ENCODE measurements at regions of chr2 and their contacts with region 1.

Region 1: DNA sequence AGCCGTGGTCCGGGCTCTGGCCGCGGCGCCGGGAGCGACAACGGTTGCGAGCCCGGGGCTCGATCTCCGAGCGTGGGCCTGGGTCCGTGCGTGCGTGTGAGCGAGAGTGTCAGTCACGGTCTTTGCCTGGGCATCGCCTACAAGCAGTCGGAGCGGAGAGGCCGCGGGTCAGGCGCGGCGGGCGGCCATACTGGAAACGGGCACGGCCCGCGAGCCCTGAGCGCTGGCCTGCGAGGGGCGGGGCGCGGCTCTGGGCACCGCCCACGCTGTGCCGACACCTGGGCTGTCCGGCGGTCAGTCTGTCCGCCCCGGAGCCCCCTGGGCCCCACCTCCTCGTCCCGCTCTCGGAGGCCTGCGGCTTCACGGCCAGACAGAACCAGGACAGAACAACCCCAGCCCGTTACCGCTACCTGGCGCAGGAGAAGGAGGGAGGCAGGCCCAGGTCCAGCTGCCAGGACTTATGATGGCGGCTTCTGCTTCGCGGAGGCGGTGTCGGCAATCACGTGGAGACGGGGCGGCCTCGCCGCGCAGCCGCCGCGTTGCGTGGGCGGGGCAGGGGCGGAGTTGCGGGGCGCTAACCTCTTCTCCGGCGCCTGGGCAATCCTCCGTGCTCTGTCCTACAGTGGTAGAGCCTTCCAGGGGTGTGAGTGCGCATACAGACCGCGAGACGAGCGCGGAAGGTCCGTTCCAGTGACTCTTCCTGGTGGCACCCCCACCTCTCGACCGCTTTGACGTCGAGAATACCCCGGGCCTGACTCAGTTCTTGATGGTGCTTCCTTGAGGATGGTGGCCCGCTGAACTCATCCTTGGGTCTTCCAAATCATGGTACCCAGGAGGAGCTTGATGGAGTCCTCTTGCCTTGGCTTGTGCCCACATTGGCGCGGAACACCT is at the start of gene TMEM131:
- DNase-seq: peak; percentile 95
- H3K4me3 ChIP-seq: peak within 1 kb of the TSS; percentile 95 to 98 (median 97)
- H3K27ac ChIP-seq: peak within 1 kb of the TSS; percentile 91
- H3K4me1 ChIP-seq: peaks cover 22% of the 10 kb centered on the region
- H3K27me3 ChIP-seq: no peaks in the 10 kb centered on the region
- CTCF ChIP-seq: no peak
- total RNA-seq, gene TMEM131: 66.2 to 67.9 TPM

Region 2: GRCh38 chr2:97870396-97870843 is 125.6 kb before region 1 on chr2:
- CTCF ChIA-PET with region 1: no interaction called
- dilution Hi-C with region 1: no loop called
- in situ Hi-C with region 1: no loop called
- intact Hi-C with region 1: loop called (anchors 1 kb)
- DNase-seq: peak; percentile 82
- H3K4me3 ChIP-seq: no peak overlapping the region
- H3K27ac ChIP-seq: peak overlapping the region; percentile 85
- H3K4me1 ChIP-seq: peaks cover 42% of the 10 kb centered on the region
- H3K27me3 ChIP-seq: no peaks in the 10 kb centered on the region
- CTCF ChIP-seq: no peak

Region 3: DNA sequence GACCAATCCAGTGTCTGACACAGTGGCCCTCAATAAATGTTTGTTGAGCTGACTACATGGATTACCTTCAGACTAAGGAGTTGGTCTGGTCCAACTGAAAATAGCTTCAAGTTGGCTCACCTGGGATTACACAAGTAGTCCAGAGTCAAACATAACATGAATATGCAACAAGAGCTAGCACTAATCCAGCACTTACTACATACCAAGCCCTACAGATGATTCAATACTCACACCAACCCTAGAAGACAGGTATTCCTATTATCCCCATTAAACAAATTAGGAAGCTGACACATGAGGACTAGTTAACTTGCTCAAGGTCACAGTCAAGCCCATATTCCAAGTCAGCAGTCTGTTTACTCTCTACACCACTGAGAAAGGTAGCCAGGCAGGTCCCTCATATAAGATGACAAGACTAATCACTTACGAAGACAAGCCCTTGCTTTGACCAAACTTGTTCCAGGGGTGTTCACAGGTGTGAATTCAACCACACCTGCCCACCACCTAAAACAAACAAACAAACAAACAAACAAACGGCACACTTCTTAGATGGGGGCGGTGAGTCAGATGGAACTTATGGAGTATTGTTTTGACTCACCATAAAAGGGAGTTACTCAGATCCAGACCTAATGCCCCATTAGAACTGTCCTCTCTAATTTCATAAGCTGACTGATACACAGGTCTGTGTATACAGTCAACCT is 29.3 kb before region 1 on chr2:
- CTCF ChIA-PET with region 1: interaction called, 4 read pairs
- dilution Hi-C with region 1: no loop called
- in situ Hi-C with region 1: no loop called
- intact Hi-C with region 1: loop called (anchors 1 kb)
- DNase-seq: peak; percentile 64
- H3K4me3 ChIP-seq: no peak overlapping the region
- H3K27ac ChIP-seq: no peak overlapping the region
- H3K4me1 ChIP-seq: peaks cover 19% of the 10 kb centered on the region
- H3K27me3 ChIP-seq: no peaks in the 10 kb centered on the region
- CTCF ChIP-seq: no peak

Region 4: GRCh38 chr2:98157557-98157956 is 161.6 kb after region 1 on chr2:
- CTCF ChIA-PET with region 1: no interaction called
- dilution Hi-C with region 1: no loop called
- in situ Hi-C with region 1: loop called in 1 of 2 experiments (anchors 25 kb)
- intact Hi-C with region 1: no loop called
- DNase-seq: no peak
- H3K4me3 ChIP-seq: no peak overlapping the region
- H3K27ac ChIP-seq: no peak overlapping the region
- H3K4me1 ChIP-seq: peaks cover 16% of the 10 kb centered on the region
- H3K27me3 ChIP-seq: no peaks in the 10 kb centered on the region
- CTCF ChIP-seq: no peak

Region 5: GRCh38 chr2:98385050-98385699 is 389.2 kb after region 1 on chr2:
- CTCF ChIA-PET with region 1: no interaction called
- dilution Hi-C with region 1: no loop called
- in situ Hi-C with region 1: no loop called
- intact Hi-C with region 1: loop called (anchors 10 kb)
- DNase-seq: peak; percentile 64
- H3K4me3 ChIP-seq: no peak overlapping the region
- H3K27ac ChIP-seq: no peak overlapping the region
- H3K4me1 ChIP-seq: no peaks in the 10 kb centered on the region
- H3K27me3 ChIP-seq: peaks cover 9% of the 10 kb centered on the region
- CTCF ChIP-seq: peak; percentile 100

Measured in mammary epithelial cell (primary cell).